Transverse colon (tissue), 4 donors: ENCODE measurements at regions of chr12 and their contacts with region 1.

Region 1: GRCh38 chr12:89593873-89594272 is 68.0 kb upstream of the POC1B start:
- DNase-seq: no peak
- H3K4me3 ChIP-seq: no peak overlapping the region
- H3K27ac ChIP-seq: no peak overlapping the region
- H3K4me1 ChIP-seq: no peaks in the 10 kb centered on the region
- H3K27me3 ChIP-seq: no peaks in the 10 kb centered on the region
- CTCF ChIP-seq: no peak
- EP300 ChIP-seq: no peak
- POLR2A ChIP-seq: no peak

Region 2: GRCh38 chr12:89451841-89452251 is 142.0 kb before region 1 on chr12:
- in situ Hi-C with region 1: no loop called
- intact Hi-C with region 1: no loop called
- DNase-seq: peak; percentile 25
- H3K4me3 ChIP-seq: no peak overlapping the region
- H3K27ac ChIP-seq: peak overlapping the region; percentile 66 to 82 (median 78)
- H3K4me1 ChIP-seq: peaks cover 0 to 40% (median 13%) of the 10 kb centered on the region in 4 donors
- H3K27me3 ChIP-seq: no peaks in the 10 kb centered on the region
- CTCF ChIP-seq: no peak
- EP300 ChIP-seq: no peak
- POLR2A ChIP-seq: no peak

Region 3: DNA sequence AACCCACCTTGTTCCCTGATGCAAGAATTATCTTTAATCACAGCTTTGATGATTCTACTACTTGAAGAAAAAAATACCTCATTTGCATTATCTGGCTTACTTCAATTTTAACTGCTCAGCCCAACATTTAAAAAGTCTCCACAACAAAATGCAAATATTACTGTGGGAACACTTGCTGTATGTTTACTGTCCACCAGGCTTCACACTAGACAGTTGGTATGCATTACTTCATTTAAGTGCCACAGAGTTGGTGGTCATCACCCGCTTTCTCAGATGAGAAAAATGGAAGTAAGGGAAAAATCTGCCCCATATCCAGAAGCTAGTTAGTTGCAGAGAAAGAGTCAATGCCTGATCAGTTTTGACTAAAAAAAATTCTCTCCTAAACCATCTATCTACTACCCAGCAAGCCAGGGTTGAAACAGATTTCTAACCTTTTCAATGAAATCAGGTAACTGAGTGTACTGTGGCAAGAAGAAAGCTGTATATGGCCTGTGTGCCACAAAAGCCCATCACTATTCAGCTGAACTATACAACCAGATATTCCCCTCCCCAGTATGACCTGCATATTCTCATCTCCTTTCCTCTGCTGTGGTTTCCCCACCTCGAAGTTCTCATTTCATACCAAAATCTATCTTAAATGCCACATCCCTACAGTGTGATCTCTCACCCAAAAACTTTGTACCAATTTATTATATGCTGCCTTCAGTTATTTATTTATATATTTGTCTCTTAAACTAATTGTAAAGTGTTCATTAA is 24.4 kb after region 1 on chr12:
- in situ Hi-C with region 1: no loop called
- intact Hi-C with region 1: loop called (anchors 1 kb)
- DNase-seq: no peak
- H3K4me3 ChIP-seq: no peak overlapping the region
- H3K27ac ChIP-seq: no peak overlapping the region
- H3K4me1 ChIP-seq: no peaks in the 10 kb centered on the region
- H3K27me3 ChIP-seq: no peaks in the 10 kb centered on the region
- CTCF ChIP-seq: no peak
- EP300 ChIP-seq: no peak
- POLR2A ChIP-seq: no peak